ENCODE measurements at regions of chr11 and their contacts with region 1.

Region 1: DNA sequence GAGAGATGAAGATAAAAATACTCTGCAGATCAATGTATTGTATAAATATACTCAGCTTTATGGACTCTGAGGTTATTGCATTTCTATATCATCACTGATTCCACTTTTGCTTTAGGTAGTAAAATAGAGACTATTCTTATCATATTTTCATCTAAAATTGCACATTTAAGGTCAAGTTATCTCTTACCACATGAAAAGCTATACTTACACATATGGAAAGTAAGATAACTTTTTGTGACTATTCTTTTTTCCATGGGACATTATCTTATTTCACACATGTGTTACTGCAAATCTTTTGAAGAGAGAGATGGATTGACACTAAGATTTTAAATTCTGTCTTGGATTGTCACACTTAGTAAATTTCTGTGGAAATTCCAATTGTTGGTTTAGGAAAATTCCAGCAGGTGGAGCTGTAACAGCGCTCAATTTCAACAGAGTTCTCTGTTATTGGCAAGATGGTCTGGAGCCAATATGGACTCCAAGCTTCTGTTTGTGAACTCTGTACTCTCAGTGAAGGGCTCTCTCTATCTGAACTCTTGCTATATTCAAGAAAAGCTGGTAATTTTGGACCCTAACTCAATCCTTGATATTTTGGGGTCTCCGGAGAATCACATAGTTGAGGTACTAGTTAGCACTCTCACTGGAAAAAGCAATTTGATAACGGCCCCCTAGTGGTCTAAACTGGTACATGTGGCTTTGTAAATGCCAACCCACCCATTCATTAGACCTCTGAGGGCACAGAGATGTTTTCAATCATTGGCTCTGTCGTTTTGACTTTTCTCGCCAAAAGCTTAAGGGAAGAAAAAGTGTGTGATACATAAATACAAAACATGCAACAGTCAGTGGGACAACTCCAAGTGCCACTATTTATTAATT is 429.7 kb downstream of the ETS1 start:
- DNase-seq: peak; percentile 56
- H3K4me3 ChIP-seq: peak overlapping the region; percentile 28 to 46; a peak in 3 of 4 replicates
- H3K27ac ChIP-seq: peak overlapping the region in 1 of 2 experiments; percentile 55; a peak in 1 of 4 replicates
- H3K4me1 ChIP-seq: no peaks in the 10 kb centered on the region; a peak in 1 of 4 replicates
- H3K27me3 ChIP-seq: no peaks in the 10 kb centered on the region
- CTCF ChIP-seq: peak; percentile 100
- EP300 ChIP-seq: no peak
- RAD21 ChIP-seq: peak; percentile 72

Region 2: DNA sequence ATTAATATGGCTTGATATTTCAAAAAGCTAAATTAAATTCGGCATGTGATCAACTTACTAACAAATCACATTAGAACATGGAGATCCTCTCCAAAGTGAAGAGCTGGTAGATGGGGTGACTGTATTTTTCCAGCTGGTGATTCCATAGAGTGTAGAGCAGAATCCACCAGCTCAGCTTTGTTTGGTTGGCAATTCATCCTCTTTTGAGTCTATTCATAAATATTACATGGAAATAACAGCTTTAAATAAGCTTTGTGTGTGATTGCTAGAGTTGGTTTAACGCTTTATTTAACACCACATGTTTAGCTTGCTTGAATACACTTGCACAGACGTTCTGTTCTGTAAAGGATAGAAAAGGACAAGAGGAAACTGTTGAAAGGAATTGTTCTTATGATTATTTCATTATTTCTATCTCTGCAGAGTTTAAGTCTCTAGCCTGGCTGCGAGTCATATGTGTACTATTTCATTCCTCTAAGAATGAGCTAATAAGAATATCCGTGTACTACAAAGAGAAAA is 418.8 kb before region 1 on chr11:
- CTCF ChIA-PET with region 1: no interaction called
- POLR2A ChIA-PET with region 1: no interaction called
- DNase-seq: no peak
- H3K4me3 ChIP-seq: no peak overlapping the region
- H3K27ac ChIP-seq: no peak overlapping the region
- H3K4me1 ChIP-seq: peaks cover 0 to under 1% of the 10 kb centered on the region in 2 experiments; a peak in 2 of 4 replicates
- H3K27me3 ChIP-seq: no peaks in the 10 kb centered on the region
- CTCF ChIP-seq: no peak
- EP300 ChIP-seq: no peak
- RAD21 ChIP-seq: no peak

Region 3: GRCh38 chr11:128021349-128022006 is 136.2 kb before region 1 on chr11:
- CTCF ChIA-PET with region 1: interaction called, 14 read pairs
- POLR2A ChIA-PET with region 1: no interaction called
- DNase-seq: peak; percentile 52
- H3K4me3 ChIP-seq: no peak overlapping the region; a peak in 1 of 4 replicates
- H3K27ac ChIP-seq: no peak overlapping the region
- H3K4me1 ChIP-seq: peaks cover 2 to 10% of the 10 kb centered on the region in 2 experiments; a peak in 2 of 4 replicates
- H3K27me3 ChIP-seq: no peaks in the 10 kb centered on the region
- CTCF ChIP-seq: peak; percentile 51
- EP300 ChIP-seq: no peak
- RAD21 ChIP-seq: peak; percentile 89

Region 4: DNA sequence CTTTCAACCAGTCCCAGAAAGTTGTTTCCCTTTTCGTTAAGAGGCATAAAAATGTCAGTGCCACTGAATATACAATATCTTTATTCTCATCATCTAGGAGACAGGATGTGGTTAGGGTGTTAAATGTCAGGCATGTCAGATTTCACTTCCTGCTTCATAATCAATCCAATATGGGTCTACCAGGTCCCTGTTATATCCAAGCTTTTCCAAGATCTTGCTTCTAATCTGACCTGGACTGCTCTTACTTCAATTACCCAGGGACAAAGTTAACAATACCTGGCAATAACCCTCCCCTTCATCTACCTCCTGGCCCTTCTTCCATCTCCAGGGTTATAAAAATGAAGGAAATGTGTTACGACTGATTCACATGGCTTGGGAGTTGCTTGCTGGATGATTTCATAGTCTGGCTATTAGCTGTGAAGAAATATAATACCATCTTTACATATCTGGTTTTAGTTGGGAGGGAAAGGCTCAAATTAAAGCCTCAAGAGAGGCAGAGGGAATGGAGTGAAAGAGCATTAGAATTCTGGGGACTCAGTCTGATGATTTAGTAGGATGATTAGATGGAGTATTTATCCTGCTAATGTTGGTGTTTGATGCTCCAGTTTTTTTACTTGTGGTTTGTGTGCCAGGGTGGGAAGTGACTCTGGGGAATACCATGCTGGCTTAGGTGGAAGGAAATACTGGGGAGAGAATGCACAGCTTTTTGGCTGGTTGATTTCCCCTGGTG is 104.6 kb before region 1 on chr11:
- CTCF ChIA-PET with region 1: interaction called, 16 read pairs
- POLR2A ChIA-PET with region 1: no interaction called
- DNase-seq: peak; percentile 15
- H3K4me3 ChIP-seq: 0 out of 4 replicates have a peak overlapping the region, but pooled peaks of 1 of the 2 experiments have one; percentile 36
- H3K27ac ChIP-seq: peak overlapping the region; percentile 81 to 89
- H3K4me1 ChIP-seq: peaks cover 8 to 34% of the 10 kb centered on the region in 2 experiments
- H3K27me3 ChIP-seq: no peaks in the 10 kb centered on the region
- CTCF ChIP-seq: no peak
- EP300 ChIP-seq: peak; percentile 80
- RAD21 ChIP-seq: no peak

Region 5: DNA sequence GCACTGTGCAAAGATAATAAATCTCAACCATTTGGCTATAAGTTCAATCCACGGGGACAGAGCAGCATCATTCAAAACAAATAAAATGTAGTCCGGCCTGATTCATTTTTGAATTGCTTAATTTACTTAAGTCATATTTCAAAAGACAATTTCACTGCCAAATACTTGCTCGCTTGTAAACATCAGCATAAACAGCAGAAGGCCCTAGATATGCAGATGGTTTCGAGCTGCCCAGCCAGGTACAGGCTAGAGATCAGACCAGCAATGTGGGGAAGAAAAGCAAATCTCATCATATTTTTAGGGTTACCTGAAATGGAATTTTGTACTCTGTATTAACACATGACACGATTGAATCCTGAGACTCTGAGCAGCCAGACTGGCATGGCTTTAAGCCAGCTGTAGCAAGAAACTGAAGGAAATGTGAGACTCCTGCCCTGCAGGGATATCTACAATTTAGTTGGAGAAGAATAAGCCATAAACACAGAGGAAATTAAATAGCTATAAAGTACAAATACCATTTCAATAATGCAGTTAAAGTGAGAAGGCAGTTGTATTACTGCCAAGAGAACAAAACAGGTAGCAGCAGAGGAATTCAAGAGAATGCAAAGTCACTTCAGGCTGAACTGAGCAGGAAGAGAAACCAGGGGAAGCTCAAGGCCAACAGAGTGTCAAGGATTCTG is 10.6 kb before region 1 on chr11:
- CTCF ChIA-PET with region 1: interaction called, 68 read pairs
- POLR2A ChIA-PET with region 1: no interaction called
- DNase-seq: no peak
- H3K4me3 ChIP-seq: no peak overlapping the region
- H3K27ac ChIP-seq: no peak overlapping the region
- H3K4me1 ChIP-seq: peaks cover 0 to 2% of the 10 kb centered on the region in 2 experiments; a peak in 1 of 4 replicates
- H3K27me3 ChIP-seq: no peaks in the 10 kb centered on the region
- CTCF ChIP-seq: no peak
- EP300 ChIP-seq: no peak
- RAD21 ChIP-seq: no peak

Region 6: DNA sequence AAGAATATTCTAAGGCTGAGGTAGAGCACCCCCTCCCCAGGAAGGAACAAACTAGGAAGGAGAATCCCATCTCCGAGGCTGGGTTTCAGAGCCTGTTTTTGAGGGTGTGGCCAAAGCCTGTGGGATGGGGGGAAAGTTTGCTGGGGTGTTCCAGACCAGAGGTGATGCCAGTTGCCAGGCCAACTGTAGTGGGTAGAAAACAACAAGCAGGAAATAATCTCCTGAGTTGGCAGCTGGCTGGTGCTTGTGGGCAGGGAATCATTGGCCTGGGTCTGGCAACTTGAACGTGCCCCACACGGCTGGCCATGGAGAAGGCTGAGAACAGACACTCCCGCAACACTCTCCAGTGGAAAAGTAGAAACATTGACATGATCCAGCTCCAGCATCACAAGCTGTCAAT is 44.1 kb after region 1 on chr11:
- CTCF ChIA-PET with region 1: no interaction called
- POLR2A ChIA-PET with region 1: no interaction called
- DNase-seq: no peak
- H3K4me3 ChIP-seq: no peak overlapping the region
- H3K27ac ChIP-seq: no peak overlapping the region; a peak in 1 of 4 replicates
- H3K4me1 ChIP-seq: peaks cover 0 to 3% of the 10 kb centered on the region in 2 experiments; a peak in 2 of 4 replicates
- H3K27me3 ChIP-seq: no peaks in the 10 kb centered on the region
- CTCF ChIP-seq: no peak
- EP300 ChIP-seq: no peak
- RAD21 ChIP-seq: no peak

Region 7: DNA sequence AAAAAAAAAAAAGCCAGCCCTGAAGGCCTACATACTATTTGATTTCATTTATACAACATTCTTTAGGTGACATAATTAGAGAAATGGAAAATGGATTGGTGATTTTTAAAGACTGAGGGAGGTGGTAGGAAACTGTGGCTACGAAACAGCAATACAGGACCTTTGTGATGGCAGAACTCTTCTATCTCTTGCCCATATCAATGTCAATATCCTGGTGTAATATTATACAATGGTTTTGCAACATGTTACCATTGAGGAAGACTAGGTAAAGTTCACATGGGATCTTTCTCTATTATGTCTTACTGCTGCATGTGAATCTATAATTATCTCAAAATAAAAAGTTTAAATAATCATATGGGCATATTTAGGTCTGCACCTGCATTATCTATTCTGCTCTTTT is 58.5 kb after region 1 on chr11:
- CTCF ChIA-PET with region 1: no interaction called
- POLR2A ChIA-PET with region 1: no interaction called
- DNase-seq: no peak
- H3K4me3 ChIP-seq: no peak overlapping the region
- H3K27ac ChIP-seq: no peak overlapping the region
- H3K4me1 ChIP-seq: peaks cover 0 to 3% of the 10 kb centered on the region in 2 experiments; a peak in 1 of 4 replicates
- H3K27me3 ChIP-seq: no peaks in the 10 kb centered on the region
- CTCF ChIP-seq: no peak
- EP300 ChIP-seq: no peak
- RAD21 ChIP-seq: no peak

Region 8: GRCh38 chr11:128290106-128290840 is 132.6 kb after region 1 on chr11:
- CTCF ChIA-PET with region 1: interaction called, 28 read pairs
- POLR2A ChIA-PET with region 1: no interaction called
- DNase-seq: peak; percentile 68
- H3K4me3 ChIP-seq: no peak overlapping the region; a peak in 1 of 4 replicates
- H3K27ac ChIP-seq: peak overlapping the region; percentile 42 to 60; a peak in 3 of 4 replicates
- H3K4me1 ChIP-seq: peaks cover 0 to 16% of the 10 kb centered on the region in 2 experiments; a peak in 2 of 4 replicates
- H3K27me3 ChIP-seq: no peaks in the 10 kb centered on the region
- CTCF ChIP-seq: peak; percentile 87
- EP300 ChIP-seq: no peak; a peak in 1 of 4 replicates
- RAD21 ChIP-seq: peak; percentile 99

Region 9: DNA sequence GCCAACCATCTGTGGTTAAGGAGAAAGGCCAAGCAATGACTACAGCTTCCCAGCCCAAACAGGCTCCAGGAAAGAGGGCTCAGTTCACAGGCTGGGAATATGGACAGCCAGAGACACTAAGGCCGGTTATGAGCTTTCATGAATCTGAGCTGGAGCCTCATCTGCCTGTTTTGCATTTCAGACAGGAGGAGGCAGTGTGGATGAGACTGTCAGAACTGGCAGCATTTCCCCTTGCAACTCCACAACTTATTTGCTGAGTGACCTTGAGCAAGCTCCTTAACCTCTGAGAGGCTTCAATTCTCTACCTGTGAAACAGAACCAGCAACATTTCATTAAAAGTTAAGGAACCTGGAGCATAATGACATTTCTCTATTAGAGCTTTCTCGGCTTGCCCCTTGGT is 165.7 kb after region 1 on chr11:
- CTCF ChIA-PET with region 1: no interaction called
- POLR2A ChIA-PET with region 1: no interaction called
- DNase-seq: no peak
- H3K4me3 ChIP-seq: no peak overlapping the region
- H3K27ac ChIP-seq: no peak overlapping the region
- H3K4me1 ChIP-seq: peaks cover 0 to 2% of the 10 kb centered on the region in 2 experiments; a peak in 1 of 4 replicates
- H3K27me3 ChIP-seq: no peaks in the 10 kb centered on the region
- CTCF ChIP-seq: peak; percentile 50
- EP300 ChIP-seq: no peak
- RAD21 ChIP-seq: peak; percentile 59

Region 10: GRCh38 chr11:128658502-128658901 is 500.8 kb after region 1 on chr11:
- CTCF ChIA-PET with region 1: interaction called, 12 read pairs
- POLR2A ChIA-PET with region 1: no interaction called
- DNase-seq: no peak
- H3K4me3 ChIP-seq: no peak overlapping the region
- H3K27ac ChIP-seq: no peak overlapping the region
- H3K4me1 ChIP-seq: peaks cover 6 to 12% of the 10 kb centered on the region in 2 experiments; a peak in 2 of 4 replicates
- H3K27me3 ChIP-seq: no peaks in the 10 kb centered on the region
- CTCF ChIP-seq: no peak
- EP300 ChIP-seq: no peak
- RAD21 ChIP-seq: no peak

Region 11: GRCh38 chr11:128831174-128832120 is 673.8 kb after region 1 on chr11:
- CTCF ChIA-PET with region 1: interaction called, 92 read pairs
- POLR2A ChIA-PET with region 1: no interaction called
- DNase-seq: peak; percentile 79
- H3K4me3 ChIP-seq: peak overlapping the region in 1 of 2 experiments; percentile 34; a peak in 1 of 4 replicates
- H3K27ac ChIP-seq: peak overlapping the region in 1 of 2 experiments; percentile 27; a peak in 1 of 4 replicates
- H3K4me1 ChIP-seq: peaks cover 0 to 6% of the 10 kb centered on the region in 2 experiments; a peak in 1 of 4 replicates
- H3K27me3 ChIP-seq: no peaks in the 10 kb centered on the region
- CTCF ChIP-seq: peak; percentile 90
- EP300 ChIP-seq: no peak
- RAD21 ChIP-seq: peak; percentile 93

Measured in SK-N-SH (cell line).